Ovary (tissue), 10 donors: ENCODE measurements at regions of chrX and their contacts with region 1.

Region 1: DNA sequence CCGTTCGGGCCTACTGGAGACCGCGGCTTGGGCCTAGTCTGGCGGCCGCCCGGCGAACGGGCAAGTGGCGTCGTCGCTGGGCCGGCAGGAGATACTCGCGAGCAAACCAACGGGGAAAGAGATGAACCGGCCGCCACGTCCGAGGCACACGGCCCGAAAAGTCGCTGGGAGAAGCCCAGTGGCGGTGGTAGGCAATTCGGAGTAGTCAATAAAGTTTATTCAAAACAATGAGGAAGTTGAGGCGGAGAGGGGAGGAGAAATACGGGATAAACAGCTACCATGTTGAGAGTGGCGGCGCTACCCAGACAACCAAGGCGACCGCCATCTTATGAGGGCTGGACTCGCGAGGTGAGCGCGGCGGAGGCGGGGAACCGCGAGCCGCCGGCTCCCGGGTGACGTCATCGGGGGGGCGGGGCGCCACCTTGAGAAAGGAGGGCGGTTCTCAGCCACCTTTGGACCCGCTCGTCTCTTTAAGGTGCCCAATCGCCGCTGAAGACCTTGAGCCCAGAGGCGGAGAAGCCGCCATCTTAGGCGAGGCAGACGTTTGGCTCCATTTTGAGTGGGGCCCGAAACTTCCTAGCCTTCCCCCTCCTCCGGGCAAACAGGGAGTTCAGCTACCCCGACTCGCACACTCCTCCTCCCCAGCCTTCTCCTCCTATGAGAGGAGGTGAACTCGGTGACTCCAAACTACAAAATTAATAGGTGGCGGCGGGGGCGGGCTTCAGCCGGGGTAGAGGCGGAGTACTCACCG is at the start of gene PHF8:
- DNase-seq: peak; percentile 94 to 97 (median 95)
- H3K4me3 ChIP-seq: peak within 1 kb of the TSS; percentile 67
- H3K27ac ChIP-seq: peak within 1 kb of the TSS; percentile 87 to 94
- H3K4me1 ChIP-seq: no peaks in the 10 kb centered on the region
- H3K27me3 ChIP-seq: no peaks in the 10 kb centered on the region
- CTCF ChIP-seq: peak in 1 of 3 donors; percentile 0
- EP300 ChIP-seq: no peak
- POLR2A ChIP-seq: peak; percentile 42
- total RNA-seq, gene PHF8: 26.2 to 39.7 (median 35.6) TPM

Region 2: GRCh38 chrX:55057675-55058249 is 1013.5 kb after region 1 on chrX:
- intact Hi-C with region 1: loop called in 1 of 4 experiments (anchors 10 kb)
- DNase-seq: peak in 1 of 5 donors; percentile 40
- H3K4me3 ChIP-seq: no peak overlapping the region
- H3K27ac ChIP-seq: no peak overlapping the region
- H3K4me1 ChIP-seq: no peaks in the 10 kb centered on the region
- H3K27me3 ChIP-seq: no peaks in the 10 kb centered on the region
- CTCF ChIP-seq: peak; percentile 33 to 73 (median 66)
- EP300 ChIP-seq: no peak
- POLR2A ChIP-seq: no peak